A673 (cell line): ENCODE measurements at regions of chr2 and their contacts with region 1.

Region 1: GRCh38 chr2:177164584-177165052 is 48.0 kb upstream of the HNRNPA3 start:
- DNase-seq: peak; percentile 89
- H3K4me3 ChIP-seq: peak overlapping the region; percentile 28
- H3K27ac ChIP-seq: peak overlapping the region; percentile 66
- H3K4me1 ChIP-seq: peaks cover 48% of the 10 kb centered on the region
- H3K27me3 ChIP-seq: no peaks in the 10 kb centered on the region
- CTCF ChIP-seq: peak; percentile 100

Region 2: GRCh38 chr2:177296040-177296439 is 131.4 kb after region 1 on chr2:
- CTCF ChIA-PET with region 1: interaction called, 9 read pairs
- POLR2A ChIA-PET with region 1: no interaction called
- intact Hi-C with region 1: loop called (anchors 10 kb)
- DNase-seq: peak; percentile 38
- H3K4me3 ChIP-seq: no peak overlapping the region
- H3K27ac ChIP-seq: no peak overlapping the region
- H3K4me1 ChIP-seq: peaks cover 7% of the 10 kb centered on the region
- H3K27me3 ChIP-seq: no peaks in the 10 kb centered on the region
- CTCF ChIP-seq: peak; percentile 57

Region 3: GRCh38 chr2:177419274-177419673 is 254.7 kb after region 1 on chr2:
- CTCF ChIA-PET with region 1: interaction called, 3 read pairs
- POLR2A ChIA-PET with region 1: no interaction called
- intact Hi-C with region 1: loop called (anchors 5 kb)
- DNase-seq: peak; percentile 40
- H3K4me3 ChIP-seq: no peak overlapping the region
- H3K27ac ChIP-seq: peak overlapping the region; percentile 56
- H3K4me1 ChIP-seq: peaks cover 35% of the 10 kb centered on the region
- H3K27me3 ChIP-seq: no peaks in the 10 kb centered on the region
- CTCF ChIP-seq: no peak

Region 4: DNA sequence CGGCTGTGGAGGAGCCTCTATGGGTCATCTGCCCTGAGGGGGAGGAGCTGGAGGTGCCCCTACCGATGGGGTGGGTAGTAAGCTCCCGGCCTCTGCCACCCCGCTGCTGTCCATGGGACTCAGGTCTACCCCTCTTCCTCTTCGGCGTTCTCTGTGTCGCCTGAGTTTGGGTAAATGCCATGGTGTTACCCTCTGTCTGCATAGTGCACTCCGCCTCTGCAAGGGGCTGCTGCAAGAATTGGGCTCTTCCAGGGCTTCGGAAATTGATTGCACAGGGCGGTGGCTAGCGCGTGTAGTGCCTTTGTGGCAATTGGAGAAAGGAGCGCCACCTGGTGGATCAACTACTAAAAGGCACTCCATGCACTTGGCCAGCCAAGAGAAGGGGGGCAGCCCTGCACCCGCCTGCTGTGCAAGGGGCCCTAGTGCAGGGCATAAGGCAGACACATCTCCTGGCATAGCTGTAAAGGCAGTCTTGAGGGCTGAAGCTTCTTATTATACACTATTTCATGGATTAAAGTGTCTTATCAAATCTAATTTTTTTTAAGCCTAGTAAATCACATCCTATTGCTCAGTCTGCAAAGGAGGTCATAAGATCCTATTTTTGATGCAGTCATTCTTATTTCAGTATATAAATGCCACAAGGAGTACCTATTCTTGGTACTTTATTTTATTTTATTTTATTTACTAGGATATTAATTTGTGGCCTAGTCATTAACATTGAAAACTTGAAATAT is 599.1 kb after region 1 on chr2:
- CTCF ChIA-PET with region 1: interaction called, 3 read pairs
- POLR2A ChIA-PET with region 1: no interaction called
- intact Hi-C with region 1: loop called (anchors 2 kb)
- DNase-seq: peak; percentile 90
- H3K4me3 ChIP-seq: no peak overlapping the region
- H3K27ac ChIP-seq: no peak overlapping the region
- H3K4me1 ChIP-seq: no peaks in the 10 kb centered on the region
- H3K27me3 ChIP-seq: no peaks in the 10 kb centered on the region
- CTCF ChIP-seq: peak; percentile 93

Region 5: GRCh38 chr2:177888581-177888980 is 724.0 kb after region 1 on chr2:
- CTCF ChIA-PET with region 1: no interaction called
- POLR2A ChIA-PET with region 1: no interaction called
- intact Hi-C with region 1: no loop called
- DNase-seq: no peak
- H3K4me3 ChIP-seq: no peak overlapping the region
- H3K27ac ChIP-seq: no peak overlapping the region
- H3K4me1 ChIP-seq: no peaks in the 10 kb centered on the region
- H3K27me3 ChIP-seq: no peaks in the 10 kb centered on the region
- CTCF ChIP-seq: no peak